A673 (cell line): ENCODE measurements at regions of chr17 and their contacts with region 1.

Region 1: DNA sequence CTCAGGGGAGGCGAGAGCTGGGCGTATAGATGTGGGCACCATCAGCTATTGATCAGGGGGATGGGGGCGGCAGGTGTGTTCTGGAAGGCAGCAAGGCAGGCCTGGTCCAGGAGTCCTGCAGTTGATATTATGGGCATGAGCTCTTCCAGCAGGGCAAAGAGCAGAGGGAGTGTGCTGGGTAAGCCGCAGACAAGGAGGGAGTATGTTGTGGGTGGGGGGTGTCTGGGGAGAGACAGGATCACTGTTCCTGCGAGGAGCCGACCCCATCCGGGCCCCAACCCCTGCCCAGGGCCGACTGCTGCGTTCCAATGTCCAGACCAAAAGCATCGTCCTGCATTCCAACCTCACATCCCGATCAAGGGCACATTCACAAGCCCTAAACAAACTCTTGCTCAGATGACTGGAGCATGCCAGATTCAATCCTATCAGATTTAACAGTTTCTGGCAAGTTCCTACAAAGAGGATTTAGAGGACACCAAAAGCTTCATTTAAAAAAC is 9.2 kb downstream of the MXRA7 start:
- DNase-seq: no peak
- H3K4me3 ChIP-seq: no peak overlapping the region
- H3K27ac ChIP-seq: no peak overlapping the region
- H3K4me1 ChIP-seq: peaks cover 19% of the 10 kb centered on the region
- H3K27me3 ChIP-seq: no peaks in the 10 kb centered on the region
- CTCF ChIP-seq: no peak

Region 2: GRCh38 chr17:76547184-76547641 is 154.3 kb before region 1 on chr17:
- CTCF ChIA-PET with region 1: no interaction called
- POLR2A ChIA-PET with region 1: no interaction called
- intact Hi-C with region 1: no loop called
- DNase-seq: peak; percentile 91
- H3K4me3 ChIP-seq: no peak overlapping the region
- H3K27ac ChIP-seq: peak overlapping the region; percentile 54
- H3K4me1 ChIP-seq: peaks cover 34% of the 10 kb centered on the region
- H3K27me3 ChIP-seq: no peaks in the 10 kb centered on the region
- CTCF ChIP-seq: peak; percentile 84

Region 3: DNA sequence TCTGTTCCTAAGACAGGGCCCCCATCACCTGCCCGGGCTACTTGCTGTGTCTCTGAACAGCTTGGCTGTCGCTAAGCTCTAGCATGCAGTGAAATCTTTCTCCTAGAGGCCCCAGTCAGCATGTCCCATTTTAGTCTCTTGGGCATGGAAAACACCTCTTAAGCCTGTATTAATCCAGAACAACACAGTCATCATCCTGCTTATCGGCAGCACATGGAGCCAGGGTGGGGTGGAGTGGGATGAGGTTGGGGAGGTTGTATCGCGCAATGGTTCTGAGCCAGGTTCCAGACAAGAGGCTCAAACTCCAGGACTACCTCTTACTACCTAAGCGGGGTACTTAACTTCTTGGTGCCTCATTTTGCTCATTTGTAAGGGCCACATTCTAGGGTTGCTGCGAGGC is 123.6 kb before region 1 on chr17:
- CTCF ChIA-PET with region 1: interaction called, 11 read pairs
- POLR2A ChIA-PET with region 1: no interaction called
- intact Hi-C with region 1: no loop called
- DNase-seq: no peak
- H3K4me3 ChIP-seq: no peak overlapping the region
- H3K27ac ChIP-seq: no peak overlapping the region
- H3K4me1 ChIP-seq: no peaks in the 10 kb centered on the region
- H3K27me3 ChIP-seq: no peaks in the 10 kb centered on the region
- CTCF ChIP-seq: no peak

Region 4: GRCh38 chr17:76689859-76690258 is 11.7 kb before region 1 on chr17:
- CTCF ChIA-PET with region 1: interaction called, 9 read pairs
- POLR2A ChIA-PET with region 1: interaction called, 15 read pairs
- intact Hi-C with region 1: no loop called
- DNase-seq: no peak
- H3K4me3 ChIP-seq: no peak overlapping the region
- H3K27ac ChIP-seq: no peak overlapping the region
- H3K4me1 ChIP-seq: no peaks in the 10 kb centered on the region
- H3K27me3 ChIP-seq: no peaks in the 10 kb centered on the region
- CTCF ChIP-seq: no peak